Activated naive CD4-positive, alpha-beta T cell treated with anti-CD3 and anti-CD28 coated beads, Interleukin-2, amount 10 ng/mL, durations not matched to agents 7 days and 5 days (primary cell): ENCODE measurements at regions of chr5 and their contacts with region 1.

Region 1: DNA sequence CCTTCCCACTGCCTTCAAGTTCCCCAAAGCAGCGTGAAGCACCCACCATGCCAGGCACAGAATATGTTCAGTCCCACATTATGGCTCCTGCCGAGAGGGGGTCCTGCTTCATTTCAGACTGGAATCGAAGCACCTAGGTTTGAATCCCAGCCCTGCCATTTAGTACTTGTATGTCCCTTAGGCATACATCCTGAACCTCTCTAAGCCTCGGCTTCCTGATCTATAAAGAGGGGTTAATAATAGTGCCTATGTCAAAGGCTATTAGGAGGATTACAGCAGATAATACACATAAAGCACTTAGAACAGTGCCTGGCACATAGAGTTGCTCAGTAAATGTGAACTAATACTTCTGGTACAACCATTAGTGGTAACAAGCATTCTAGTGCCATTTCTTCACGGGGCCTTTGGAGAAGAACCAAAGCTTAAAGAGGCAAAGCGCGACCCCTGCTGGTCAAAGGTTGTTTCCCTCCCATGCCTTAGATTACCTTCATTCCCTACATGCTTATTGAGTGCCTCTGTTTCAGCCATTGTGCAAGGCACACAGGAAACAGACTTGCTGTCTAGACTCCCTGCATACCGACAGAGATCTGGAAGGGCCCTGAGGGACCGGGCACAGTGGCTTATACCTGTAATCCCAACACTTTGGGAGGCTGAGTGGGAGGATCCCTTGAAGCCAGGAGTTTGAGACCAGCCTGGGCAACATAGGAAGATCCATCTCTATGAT is 98.2 kb downstream of the PPARGC1B start:
- DNase-seq: peak; percentile 90
- H3K4me3 Mint-ChIP-seq: no peak overlapping the region
- H3K27ac Mint-ChIP-seq: no peak overlapping the region
- H3K4me1 Mint-ChIP-seq: peaks cover 2% of the 10 kb centered on the region
- H3K27me3 Mint-ChIP-seq: no peaks in the 10 kb centered on the region

Region 2: GRCh38 chr5:149636851-149637246 is 191.5 kb before region 1 on chr5:
- CTCF ChIA-PET with region 1: interaction called, 212 read pairs
- DNase-seq: peak; percentile 74
- H3K4me3 Mint-ChIP-seq: no peak overlapping the region
- H3K27ac Mint-ChIP-seq: no peak overlapping the region
- H3K4me1 Mint-ChIP-seq: no peaks in the 10 kb centered on the region
- H3K27me3 Mint-ChIP-seq: peaks cover 6% of the 10 kb centered on the region

Region 3: DNA sequence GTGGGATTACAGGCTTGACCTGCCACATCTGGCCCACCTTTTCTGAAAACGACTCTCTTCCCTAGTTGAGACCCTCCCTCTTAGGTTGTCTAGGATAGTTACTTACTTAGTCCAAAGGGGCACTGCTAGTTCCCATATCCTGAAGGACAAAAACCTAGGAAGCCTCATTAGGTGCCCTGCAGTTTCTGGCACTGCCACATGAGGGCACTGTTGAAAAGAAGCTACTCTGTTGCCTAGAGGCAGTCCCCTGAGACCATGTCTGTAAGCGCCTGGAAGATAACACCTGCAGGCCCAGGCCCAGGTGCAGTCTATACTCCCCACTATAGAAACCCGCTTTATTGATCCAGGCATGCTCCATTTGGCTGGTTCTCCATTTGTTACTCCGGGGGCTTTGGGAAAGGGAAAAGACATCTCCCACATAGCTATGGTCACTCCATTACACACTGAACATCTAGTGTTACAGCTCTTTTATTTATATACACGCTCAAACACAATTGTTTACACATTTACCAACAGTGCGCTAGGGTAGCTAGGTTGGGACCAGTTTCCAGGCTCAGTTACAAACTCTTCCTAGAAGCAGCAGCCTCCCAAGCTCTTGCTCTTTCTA is 171.6 kb before region 1 on chr5:
- CTCF ChIA-PET with region 1: interaction called, 19 read pairs
- DNase-seq: peak; percentile 54
- H3K4me3 Mint-ChIP-seq: no peak overlapping the region
- H3K27ac Mint-ChIP-seq: no peak overlapping the region
- H3K4me1 Mint-ChIP-seq: no peaks in the 10 kb centered on the region
- H3K27me3 Mint-ChIP-seq: peaks cover 12% of the 10 kb centered on the region

Region 4: DNA sequence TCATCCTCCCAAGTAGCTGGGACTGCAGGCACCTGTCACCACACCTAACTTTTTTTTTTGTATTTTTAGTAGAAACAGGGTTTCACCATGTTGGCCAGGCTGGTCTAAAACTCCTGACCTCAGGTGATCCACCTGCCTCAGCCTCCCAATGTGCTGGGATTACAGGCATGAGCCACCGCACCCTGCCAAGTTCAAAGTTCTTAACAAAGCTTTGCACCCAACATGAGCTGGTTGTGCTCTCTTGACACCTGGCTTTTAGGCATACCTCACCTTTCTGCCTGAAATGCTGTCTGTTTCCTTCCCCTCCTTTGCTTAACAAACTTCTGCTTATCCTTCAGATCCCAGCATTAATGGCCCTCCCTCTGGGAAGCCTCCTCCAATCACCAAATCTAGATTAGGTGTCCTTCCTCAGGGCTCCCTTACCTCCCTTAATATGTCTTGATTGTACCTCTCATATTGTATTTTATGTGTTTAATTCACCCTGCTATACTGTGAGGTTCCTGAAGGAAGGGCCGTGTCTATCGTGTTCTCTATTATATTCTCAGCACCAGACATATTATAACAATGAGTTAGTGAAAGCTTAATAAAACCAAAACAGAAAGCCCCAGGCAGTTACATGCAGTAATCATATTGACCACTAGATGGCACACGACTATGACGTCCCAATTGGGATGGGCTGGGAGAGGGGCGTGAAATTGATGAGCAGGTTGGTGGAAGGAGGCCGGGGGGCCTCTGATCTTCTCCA is 161.1 kb before region 1 on chr5:
- CTCF ChIA-PET with region 1: interaction called, 69 read pairs
- DNase-seq: peak; percentile 47
- H3K4me3 Mint-ChIP-seq: no peak overlapping the region
- H3K27ac Mint-ChIP-seq: no peak overlapping the region
- H3K4me1 Mint-ChIP-seq: no peaks in the 10 kb centered on the region
- H3K27me3 Mint-ChIP-seq: peaks cover 4% of the 10 kb centered on the region

Region 5: GRCh38 chr5:149852641-149853330 is 24.5 kb after region 1 on chr5:
- CTCF ChIA-PET with region 1: interaction called, 188 read pairs
- DNase-seq: peak; percentile 60
- H3K4me3 Mint-ChIP-seq: no peak overlapping the region
- H3K27ac Mint-ChIP-seq: no peak overlapping the region
- H3K4me1 Mint-ChIP-seq: no peaks in the 10 kb centered on the region
- H3K27me3 Mint-ChIP-seq: no peaks in the 10 kb centered on the region

Region 6: DNA sequence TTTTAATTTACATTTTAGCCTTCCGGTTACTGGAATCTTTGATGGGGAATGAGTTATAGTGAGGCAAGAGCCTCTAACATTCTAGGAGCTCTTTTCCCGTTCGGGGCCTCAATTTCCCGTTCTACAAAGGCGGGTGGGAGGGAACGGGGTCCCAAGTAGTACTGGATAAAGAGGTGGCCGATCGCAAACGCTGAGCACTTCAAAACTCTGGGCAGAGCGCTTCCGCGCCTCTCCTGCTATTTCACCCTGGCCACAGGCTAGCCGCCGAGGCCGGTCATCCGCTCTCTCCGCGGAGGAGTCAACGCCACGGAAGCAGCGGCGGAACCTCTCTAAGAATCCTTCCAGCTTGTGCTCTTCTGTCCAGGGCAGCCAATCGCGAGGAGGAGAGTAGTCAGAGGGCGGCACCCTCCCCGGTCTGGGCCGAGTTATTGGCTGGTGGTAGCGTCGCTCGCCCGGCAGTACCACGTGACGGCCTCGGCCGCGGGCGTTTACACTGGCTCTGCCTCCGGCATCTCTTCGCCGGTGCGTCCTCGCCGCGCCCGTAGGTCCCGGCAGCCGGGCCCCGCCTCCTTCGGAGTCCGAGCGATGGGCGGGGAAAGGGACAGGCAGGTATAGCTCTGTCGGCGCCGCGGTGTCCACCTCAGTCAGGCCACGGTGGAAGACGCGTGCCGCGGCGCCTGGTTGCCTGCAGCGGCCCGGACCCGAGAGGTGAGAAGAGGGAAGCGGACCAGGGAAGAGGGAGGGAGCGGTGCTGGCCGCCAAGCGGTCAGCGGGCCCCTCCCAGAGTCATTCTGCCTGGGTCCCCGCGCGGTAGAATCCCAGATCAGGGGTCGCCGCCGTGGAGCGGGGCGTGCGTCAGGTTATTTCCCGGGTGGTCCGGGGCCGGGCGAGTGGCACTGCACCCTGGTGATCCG is 132.2 kb after region 1 on chr5 and contains the start of gene SLC26A2:
- CTCF ChIA-PET with region 1: interaction called, 180 read pairs
- DNase-seq: peak; percentile 97
- H3K4me3 Mint-ChIP-seq: peak within 1 kb of the TSS; percentile 80
- H3K27ac Mint-ChIP-seq: peak within 1 kb of the TSS; percentile 95
- H3K4me1 Mint-ChIP-seq: peaks cover 32% of the 10 kb centered on the region
- H3K27me3 Mint-ChIP-seq: no peaks in the 10 kb centered on the region

Region 7: DNA sequence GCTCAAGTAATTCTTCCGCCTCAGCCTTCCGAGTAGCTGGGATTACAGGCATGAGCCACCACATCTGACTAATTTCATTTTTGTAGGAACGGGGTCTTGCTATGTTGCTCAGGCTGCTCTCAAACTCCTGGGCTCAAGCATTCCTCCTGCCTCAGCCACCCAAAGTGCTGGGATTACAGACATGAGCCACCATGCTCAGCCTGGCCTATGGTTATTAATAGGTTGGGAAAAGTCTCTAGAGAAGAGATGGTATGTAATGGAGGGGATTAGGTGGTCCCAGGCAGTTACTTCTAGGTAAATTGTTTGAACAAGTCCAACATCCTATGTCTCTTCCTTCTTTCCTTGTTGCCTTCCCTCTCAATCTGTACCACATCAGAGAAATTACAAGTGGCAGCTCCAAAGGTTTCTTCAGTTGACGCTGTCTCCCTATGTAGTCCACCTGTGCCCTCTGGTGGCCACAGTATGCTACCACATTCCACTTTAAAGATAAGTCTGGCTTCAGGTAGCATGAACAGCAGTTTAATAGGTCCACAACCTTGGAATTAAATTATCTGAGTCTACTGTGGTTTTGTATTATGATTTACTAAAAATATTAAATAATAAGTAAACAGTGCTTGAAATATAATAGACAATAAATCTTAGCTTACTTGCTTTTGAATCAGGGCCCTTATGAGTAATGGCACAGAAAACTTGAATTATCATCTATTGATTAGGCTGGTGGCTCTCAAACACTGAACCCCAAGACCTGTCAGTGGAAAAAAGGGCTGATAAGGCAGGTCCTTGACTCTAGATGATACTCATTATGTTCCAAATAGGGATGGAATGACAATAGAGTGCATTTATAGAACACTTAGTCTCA is 162.4 kb after region 1 on chr5:
- CTCF ChIA-PET with region 1: interaction called, 219 read pairs
- DNase-seq: peak; percentile 76
- H3K4me3 Mint-ChIP-seq: no peak overlapping the region
- H3K27ac Mint-ChIP-seq: no peak overlapping the region
- H3K4me1 Mint-ChIP-seq: no peaks in the 10 kb centered on the region
- H3K27me3 Mint-ChIP-seq: no peaks in the 10 kb centered on the region